ENCODE measurements at regions of chr11 and their contacts with region 1.

Region 1: GRCh38 chr11:123110356-123110755 is 48.4 kb upstream of the HSPA8 start:
- DNase-seq: no peak
- H3K4me3 ChIP-seq: no peak overlapping the region
- H3K27ac ChIP-seq: peak overlapping the region; percentile 76 to 80
- H3K4me1 ChIP-seq: peaks cover 5 to 21% of the 10 kb centered on the region in 2 donors
- H3K27me3 ChIP-seq: no peaks in the 10 kb centered on the region
- CTCF ChIP-seq: no peak

Region 2: GRCh38 chr11:123235117-123235655 is 124.8 kb after region 1 on chr11:
- intact Hi-C with region 1: loop called (anchors 1 kb)
- DNase-seq: peak in 1 of 2 donors; percentile 82
- H3K4me3 ChIP-seq: peak overlapping the region in 1 of 2 donors; percentile 25
- H3K27ac ChIP-seq: peak overlapping the region; percentile 58 to 59
- H3K4me1 ChIP-seq: peaks cover 0 to 3% of the 10 kb centered on the region in 2 donors
- H3K27me3 ChIP-seq: no peaks in the 10 kb centered on the region
- CTCF ChIP-seq: peak; percentile 63 to 83 (median 63)

Region 3: GRCh38 chr11:123246749-123247495 is 136.6 kb after region 1 on chr11:
- intact Hi-C with region 1: loop called (anchors 1 kb)
- DNase-seq: peak in 1 of 2 donors; percentile 89
- H3K4me3 ChIP-seq: peak overlapping the region in 1 of 2 donors; percentile 24
- H3K27ac ChIP-seq: no peak overlapping the region
- H3K4me1 ChIP-seq: peaks cover 0 to 4% of the 10 kb centered on the region in 2 donors
- H3K27me3 ChIP-seq: no peaks in the 10 kb centered on the region
- CTCF ChIP-seq: peak; percentile 90 to 98 (median 95)

Measured in ascending aorta (tissue), 2 donors.